IMR-90 (cell line): ENCODE measurements at regions of chr9 and their contacts with region 1.

Region 1: GRCh38 chr9:105466898-105467455 is 19.1 kb downstream of the FSD1L start:
- DNase-seq: peak; percentile 89
- ATAC-seq: peak; percentile 97
- H3K4me3 ChIP-seq: no peak overlapping the region
- H3K27ac ChIP-seq: no peak overlapping the region
- H3K4me1 ChIP-seq: peaks cover 2% of the 10 kb centered on the region; the same call in 1 of the 2 replicates
- H3K27me3 ChIP-seq: no peaks in the 10 kb centered on the region
- CTCF ChIP-seq: no peak
- POLR2A ChIP-seq: no peak
- RAD21 ChIP-seq: no peak

Region 2: GRCh38 chr9:104991144-104991953 is 475.6 kb before region 1 on chr9:
- CTCF ChIA-PET with region 1: no interaction called
- POLR2A ChIA-PET with region 1: no interaction called
- dilution Hi-C with region 1: no loop called
- in situ Hi-C with region 1: no loop called
- intact Hi-C with region 1: no loop called
- DNase-seq: peak; percentile 82
- ATAC-seq: peak; percentile 85
- H3K4me3 ChIP-seq: peak overlapping the region; percentile 65
- H3K27ac ChIP-seq: peak overlapping the region; percentile 98
- H3K4me1 ChIP-seq: peaks cover 25% of the 10 kb centered on the region
- H3K27me3 ChIP-seq: no peaks in the 10 kb centered on the region
- CTCF ChIP-seq: no peak
- POLR2A ChIP-seq: peak; percentile 37; the same call in 1 of the 2 replicates
- RAD21 ChIP-seq: peak; percentile 27

Region 3: DNA sequence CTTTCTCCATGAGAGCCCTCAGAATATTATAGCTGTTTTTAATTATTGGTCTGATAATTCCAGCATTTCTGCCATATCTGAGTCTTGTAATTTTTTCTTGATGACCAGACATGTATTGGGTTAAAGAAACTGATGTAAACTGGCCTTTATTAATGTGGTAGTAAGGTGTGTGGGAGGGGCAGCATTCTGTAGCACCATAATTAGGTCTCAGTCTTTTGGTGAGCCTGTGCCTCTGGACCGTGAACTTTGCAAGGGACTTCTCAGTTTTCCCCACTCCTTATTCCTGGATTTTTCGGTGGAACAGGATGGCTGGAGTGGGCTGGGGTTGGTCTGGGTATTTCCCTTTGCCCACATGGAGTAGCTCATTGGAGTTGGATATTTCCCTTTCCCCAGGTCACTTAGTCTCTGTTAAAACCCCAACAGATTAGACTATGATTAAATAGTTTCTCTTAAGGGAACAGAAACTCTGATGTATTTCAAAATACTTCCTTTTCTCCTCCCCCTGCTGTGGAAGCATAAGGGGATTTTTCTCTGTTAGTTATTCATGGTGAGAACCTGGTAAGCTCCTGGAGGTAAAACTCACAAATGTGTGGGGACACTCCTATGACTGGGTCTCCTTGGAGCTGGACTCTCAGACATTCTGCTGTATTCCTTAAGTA is 33.3 kb after region 1 on chr9:
- CTCF ChIA-PET with region 1: no interaction called
- POLR2A ChIA-PET with region 1: no interaction called
- dilution Hi-C with region 1: no loop called
- in situ Hi-C with region 1: no loop called
- intact Hi-C with region 1: loop called (anchors 5 kb)
- DNase-seq: peak; percentile 12
- ATAC-seq: no peak
- H3K4me3 ChIP-seq: no peak overlapping the region
- H3K27ac ChIP-seq: no peak overlapping the region
- H3K4me1 ChIP-seq: no peaks in the 10 kb centered on the region; the same call in 1 of the 2 replicates
- H3K27me3 ChIP-seq: no peaks in the 10 kb centered on the region
- CTCF ChIP-seq: no peak
- POLR2A ChIP-seq: no peak
- RAD21 ChIP-seq: no peak